ENCODE measurements at regions of chr12 and their contacts with region 1.

Region 1: GRCh38 chr12:69130064-69130463 is 109.3 kb upstream of the CPSF6 start:
- DNase-seq: peak; percentile 45
- H3K4me3 Mint-ChIP-seq: no peak overlapping the region
- H3K27ac Mint-ChIP-seq: no peak overlapping the region
- H3K4me1 Mint-ChIP-seq: no peaks in the 10 kb centered on the region
- H3K27me3 Mint-ChIP-seq: no peaks in the 10 kb centered on the region
- CTCF ChIP-seq: peak; percentile 30

Region 2: DNA sequence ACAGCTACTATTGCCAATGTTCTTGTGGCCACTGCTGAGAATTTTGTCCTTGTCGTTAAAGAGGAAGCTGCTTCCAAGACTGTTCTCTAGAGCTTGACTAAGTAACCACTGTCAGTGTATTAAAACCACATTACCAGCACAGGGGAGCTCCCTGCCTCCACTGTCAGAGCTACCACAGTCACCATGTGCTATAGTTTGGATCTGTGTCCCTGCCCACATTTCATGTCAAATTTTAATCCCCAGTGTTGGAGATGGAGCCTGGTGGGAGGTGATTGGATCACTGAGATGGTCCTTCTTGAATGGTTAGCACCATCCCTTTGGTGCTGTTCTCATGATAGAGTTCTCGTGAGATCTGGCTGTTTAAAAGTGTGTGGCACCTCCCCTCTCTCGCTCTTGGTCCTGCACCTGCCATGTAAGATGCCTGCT is 542.6 kb before region 1 on chr12:
- CTCF ChIA-PET with region 1: no interaction called
- POLR2A ChIA-PET with region 1: no interaction called
- intact Hi-C with region 1: no loop called
- DNase-seq: no peak
- H3K4me3 Mint-ChIP-seq: no peak overlapping the region
- H3K27ac Mint-ChIP-seq: no peak overlapping the region
- H3K4me1 Mint-ChIP-seq: peaks cover 6% of the 10 kb centered on the region
- H3K27me3 Mint-ChIP-seq: no peaks in the 10 kb centered on the region
- CTCF ChIP-seq: no peak

Region 3: GRCh38 chr12:68865399-68866164 is 264.5 kb before region 1 on chr12:
- CTCF ChIA-PET with region 1: no interaction called
- POLR2A ChIA-PET with region 1: no interaction called
- intact Hi-C with region 1: loop called (anchors 2 kb)
- DNase-seq: no peak
- H3K4me3 Mint-ChIP-seq: no peak overlapping the region
- H3K27ac Mint-ChIP-seq: no peak overlapping the region
- H3K4me1 Mint-ChIP-seq: no peaks in the 10 kb centered on the region
- H3K27me3 Mint-ChIP-seq: no peaks in the 10 kb centered on the region
- CTCF ChIP-seq: no peak

Region 4: DNA sequence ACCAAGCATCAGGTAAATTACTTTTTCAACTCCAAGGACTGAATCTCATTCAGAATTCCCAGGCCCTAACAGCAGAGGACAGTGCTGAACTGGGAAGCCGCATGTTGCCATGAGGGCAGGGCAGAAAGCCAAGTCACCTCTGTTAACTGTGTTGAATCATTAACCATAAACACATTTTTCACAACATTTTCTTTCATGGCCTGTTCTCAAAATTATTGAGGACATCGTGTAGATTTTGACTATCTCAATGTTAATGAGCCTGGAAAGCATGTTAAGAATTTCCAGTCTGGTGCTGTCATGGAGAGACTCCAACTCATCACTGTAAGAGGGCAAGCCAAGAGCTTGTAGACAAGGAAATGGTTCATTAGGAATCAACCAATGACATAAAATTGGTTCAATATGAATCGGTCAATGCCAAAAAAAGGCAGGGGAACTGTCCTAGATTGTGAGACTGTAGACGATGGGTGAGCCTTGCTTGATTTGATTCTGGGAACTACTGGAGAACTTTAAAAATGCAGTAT is 230.8 kb before region 1 on chr12:
- CTCF ChIA-PET with region 1: interaction called, 9 read pairs
- POLR2A ChIA-PET with region 1: no interaction called
- intact Hi-C with region 1: loop called (anchors 1 kb)
- DNase-seq: peak; percentile 84
- H3K4me3 Mint-ChIP-seq: no peak overlapping the region
- H3K27ac Mint-ChIP-seq: peak overlapping the region; percentile 72
- H3K4me1 Mint-ChIP-seq: peaks cover 8% of the 10 kb centered on the region
- H3K27me3 Mint-ChIP-seq: no peaks in the 10 kb centered on the region
- CTCF ChIP-seq: peak; percentile 78

Region 5: GRCh38 chr12:69157023-69157655 is 27.1 kb after region 1 on chr12:
- CTCF ChIA-PET with region 1: interaction called, 10 read pairs
- POLR2A ChIA-PET with region 1: no interaction called
- intact Hi-C with region 1: no loop called
- DNase-seq: peak; percentile 71
- H3K4me3 Mint-ChIP-seq: no peak overlapping the region
- H3K27ac Mint-ChIP-seq: no peak overlapping the region
- H3K4me1 Mint-ChIP-seq: peaks cover 11% of the 10 kb centered on the region
- H3K27me3 Mint-ChIP-seq: no peaks in the 10 kb centered on the region
- CTCF ChIP-seq: peak; percentile 63

Measured in MCF 10A (cell line).